Cardiac septum (tissue), 1 donor: ENCODE measurements at regions of chr7 and their contacts with region 1.

Region 1: GRCh38 chr7:26667500-26668133 is 196.8 kb downstream of the SKAP2 start:
- DNase-seq: no peak

Region 2: DNA sequence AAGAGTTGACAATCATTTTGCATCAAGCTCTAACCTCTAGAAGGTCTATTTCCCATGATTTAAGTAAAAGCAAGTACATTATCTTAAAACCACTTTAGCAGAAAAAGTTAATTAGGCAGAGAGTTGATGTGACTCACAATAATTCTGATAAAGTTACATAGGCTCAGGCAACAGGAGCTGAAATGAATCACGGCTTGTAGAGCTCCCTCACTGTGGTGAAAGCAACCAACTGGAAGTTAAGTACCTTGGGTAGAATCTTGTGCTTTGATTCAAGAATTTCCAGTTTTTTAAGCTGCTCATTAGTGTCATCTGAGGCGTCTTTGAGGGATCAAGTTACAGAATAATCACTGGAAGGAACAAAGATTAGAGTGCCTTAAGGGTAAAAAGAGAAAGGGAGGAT is 584.5 kb before region 1 on chr7:
- intact Hi-C with region 1: loop called (anchors 10 kb)
- DNase-seq: no peak

Region 3: DNA sequence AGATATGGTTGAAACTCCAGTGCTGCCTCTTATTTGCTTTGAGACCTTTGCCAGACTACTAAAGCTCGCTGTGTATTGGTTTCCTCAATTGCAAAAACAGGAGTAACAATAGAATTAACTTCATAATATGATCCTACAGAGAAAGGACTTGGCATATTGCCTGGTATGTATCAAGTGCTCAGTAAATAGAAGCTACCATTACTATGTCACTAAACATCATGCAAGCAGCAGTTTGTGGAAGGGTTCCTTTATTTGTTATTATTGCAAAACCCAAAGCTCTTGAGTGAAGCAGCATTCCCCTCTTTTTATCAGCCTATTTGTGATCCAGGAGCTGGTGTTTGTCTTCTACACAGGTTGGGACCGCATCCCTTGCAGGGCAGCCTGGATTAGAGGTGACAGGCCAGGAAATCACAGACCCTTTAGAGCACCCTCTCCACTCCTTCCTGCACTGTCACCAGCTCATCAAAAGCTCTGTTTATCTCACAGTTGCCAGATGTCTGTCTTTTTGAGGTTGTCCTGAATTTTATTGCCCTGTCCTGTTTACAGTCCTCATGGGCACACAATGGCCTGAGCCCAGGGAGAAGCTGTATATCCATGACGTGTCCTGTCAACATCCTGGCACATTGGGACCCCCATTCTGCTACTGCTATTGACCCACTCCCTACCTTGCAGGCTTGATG is 254.5 kb before region 1 on chr7:
- intact Hi-C with region 1: no loop called
- DNase-seq: no peak

Region 4: DNA sequence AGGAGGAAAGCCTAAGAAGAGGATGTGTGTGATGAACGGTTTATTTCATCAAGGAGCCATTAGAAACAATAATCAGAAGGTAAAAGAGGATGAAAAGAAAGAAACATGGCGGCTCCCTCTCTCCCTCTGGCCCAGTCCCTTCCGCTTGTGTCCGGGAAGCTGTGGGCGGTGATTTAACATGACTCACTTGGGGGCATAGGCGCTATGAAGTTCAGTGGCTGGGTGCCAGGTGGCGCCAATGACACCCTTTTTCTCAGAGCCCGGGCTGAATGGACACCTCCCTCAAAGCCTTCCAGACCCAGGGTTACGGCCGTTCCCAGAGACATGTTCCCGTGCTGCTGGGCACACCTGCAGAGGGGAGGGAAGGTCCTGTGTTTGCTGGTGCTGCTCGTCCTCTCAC is 47.3 kb before region 1 on chr7:
- intact Hi-C with region 1: no loop called
- DNase-seq: no peak